ENCODE measurements at regions of chr9 and their contacts with region 1.

Region 1: DNA sequence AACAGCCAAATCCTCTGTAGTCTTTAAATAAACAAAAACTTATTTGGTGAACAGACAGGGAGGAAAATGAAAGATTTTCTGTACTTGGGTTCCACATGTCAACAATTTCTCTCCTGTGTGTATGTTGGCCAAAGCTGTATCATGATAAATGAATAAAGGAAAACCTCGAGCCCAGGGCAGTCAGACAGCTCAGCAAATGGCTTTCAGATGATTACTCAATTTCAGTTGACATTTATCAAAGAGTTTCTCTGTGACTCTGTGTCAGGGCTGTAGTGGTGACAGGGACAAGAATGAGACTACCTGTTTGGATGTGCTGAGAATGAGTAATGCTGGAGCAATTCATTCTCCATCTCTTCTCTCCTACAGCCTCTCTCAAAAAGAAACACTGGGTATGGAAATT is 45.7 kb upstream of the PTGS1 start:
- DNase-seq: no peak

Region 2: GRCh38 chr9:122281368-122281767 is 43.8 kb before region 1 on chr9:
- intact Hi-C with region 1: no loop called
- DNase-seq: no peak

Region 3: GRCh38 chr9:122291458-122291857 is 33.7 kb before region 1 on chr9:
- intact Hi-C with region 1: loop called (anchors 5 kb)
- DNase-seq: no peak

Region 4: DNA sequence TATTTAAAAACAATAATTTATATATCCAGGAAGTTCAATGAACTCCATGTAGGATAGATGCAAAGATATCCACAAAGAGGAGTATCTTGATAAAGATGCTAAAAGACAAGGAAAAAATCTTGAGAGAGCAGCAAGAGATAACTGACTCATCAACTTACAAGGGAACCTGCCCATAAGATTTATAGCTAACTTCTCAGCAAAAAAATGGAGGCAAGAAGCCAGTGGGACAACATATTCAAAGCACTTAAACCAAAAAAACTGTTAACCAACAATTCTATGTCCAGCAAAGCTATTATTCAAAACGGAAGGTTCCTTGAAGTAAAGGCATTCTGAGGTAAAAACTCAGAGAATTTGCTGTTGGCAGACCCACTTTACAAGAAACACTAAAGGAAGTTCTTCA is 636.0 kb after region 1 on chr9:
- intact Hi-C with region 1: no loop called
- DNase-seq: no peak